ENCODE measurements at regions of chr10 and their contacts with region 1.

Region 1: GRCh38 chr10:104925232-104925851 is 284.3 kb downstream of the SORCS3 start:
- DNase-seq: peak in 2 of 5 donors; percentile 14 to 29
- ATAC-seq: no peak
- H3K4me3 ChIP-seq: no peak overlapping the region
- H3K27ac ChIP-seq: no peak overlapping the region
- H3K4me1 ChIP-seq: no peaks in the 10 kb centered on the region
- H3K27me3 ChIP-seq: peaks cover 0 to 13% (median 0%) of the 10 kb centered on the region in 9 donors
- CTCF ChIP-seq: peak; percentile 44 to 71 (median 58)
- POLR2A ChIP-seq: no peak

Region 2: GRCh38 chr10:104406715-104407650 is 518.4 kb before region 1 on chr10:
- intact Hi-C with region 1: loop called in 1 of 10 experiments (anchors 10 kb)
- DNase-seq: no peak
- ATAC-seq: peak in 1 of 4 donors; percentile 57
- H3K4me3 ChIP-seq: no peak overlapping the region
- H3K27ac ChIP-seq: no peak overlapping the region
- H3K4me1 ChIP-seq: no peaks in the 10 kb centered on the region
- H3K27me3 ChIP-seq: no peaks in the 10 kb centered on the region
- CTCF ChIP-seq: peak; percentile 17 to 52 (median 37)
- POLR2A ChIP-seq: no peak

Region 3: GRCh38 chr10:104580774-104581675 is 344.3 kb before region 1 on chr10:
- intact Hi-C with region 1: loop called in 1 of 10 experiments (anchors 10 kb)
- DNase-seq: peak; percentile 57 to 70 (median 60)
- ATAC-seq: peak; percentile 71 to 88 (median 78)
- H3K4me3 ChIP-seq: peak overlapping the region in 2 of 12 donors; percentile 1 to 9
- H3K27ac ChIP-seq: no peak overlapping the region
- H3K4me1 ChIP-seq: peaks cover 0 to 12% (median 0%) of the 10 kb centered on the region in 12 donors
- H3K27me3 ChIP-seq: peaks cover 0 to 52% (median 10%) of the 10 kb centered on the region in 9 donors
- CTCF ChIP-seq: peak; percentile 72 to 87 (median 82)
- POLR2A ChIP-seq: no peak

Region 4: GRCh38 chr10:104642658-104643302 is 282.6 kb before region 1 on chr10:
- intact Hi-C with region 1: loop called in 6 of 10 experiments (anchors 2 to 10 kb)
- DNase-seq: peak in 4 of 5 donors; percentile 15 to 51 (median 36)
- ATAC-seq: peak in 3 of 4 donors; percentile 56 to 65 (median 60)
- H3K4me3 ChIP-seq: peak overlapping the region in 7 of 12 donors; percentile 6 to 47 (median 15)
- H3K27ac ChIP-seq: no peak overlapping the region
- H3K4me1 ChIP-seq: peaks cover 0 to 39% (median 2%) of the 10 kb centered on the region in 12 donors
- H3K27me3 ChIP-seq: peaks cover 31 to 92% (median 50%) of the 10 kb centered on the region in 9 donors
- CTCF ChIP-seq: peak in 11 of 12 donors; percentile 11 to 43 (median 26)
- POLR2A ChIP-seq: no peak

Region 5: GRCh38 chr10:104650072-104650471 is 275.3 kb before region 1 on chr10:
- intact Hi-C with region 1: loop called in 8 of 10 experiments (anchors 2 to 10 kb)
- DNase-seq: no peak
- ATAC-seq: peak in 3 of 4 donors; percentile 55 to 64 (median 64)
- H3K4me3 ChIP-seq: no peak overlapping the region
- H3K27ac ChIP-seq: no peak overlapping the region
- H3K4me1 ChIP-seq: no peaks in the 10 kb centered on the region
- H3K27me3 ChIP-seq: peaks cover 0 to 28% (median 2%) of the 10 kb centered on the region in 9 donors
- CTCF ChIP-seq: peak in 11 of 12 donors; percentile 14 to 53 (median 37)
- POLR2A ChIP-seq: no peak

Region 6: GRCh38 chr10:104657457-104657856 is 267.9 kb before region 1 on chr10:
- intact Hi-C with region 1: loop called in 2 of 10 experiments (anchors 5 kb)
- DNase-seq: no peak
- ATAC-seq: no peak
- H3K4me3 ChIP-seq: no peak overlapping the region
- H3K27ac ChIP-seq: no peak overlapping the region
- H3K4me1 ChIP-seq: no peaks in the 10 kb centered on the region
- H3K27me3 ChIP-seq: peaks cover 0 to 14% (median 0%) of the 10 kb centered on the region in 9 donors
- CTCF ChIP-seq: no peak
- POLR2A ChIP-seq: no peak

Region 7: DNA sequence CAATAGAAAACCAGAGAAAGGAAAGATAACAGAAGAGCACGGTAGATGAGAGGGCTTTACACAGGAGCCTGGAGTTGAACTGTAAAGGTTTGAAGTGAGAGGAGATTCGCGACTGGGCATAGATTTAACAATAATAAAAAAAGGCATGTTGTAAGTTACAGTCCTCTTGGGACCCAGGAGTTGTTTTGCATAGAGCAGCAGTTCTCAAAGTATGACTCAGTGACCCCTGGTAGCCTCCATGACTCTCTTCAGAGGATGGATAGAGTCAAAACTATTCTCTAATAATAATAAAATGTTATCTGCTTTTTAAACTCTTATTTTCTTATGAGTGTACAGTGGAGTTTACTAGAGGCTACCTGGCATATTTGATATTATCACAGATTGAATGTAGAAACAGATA is 21.9 kb before region 1 on chr10:
- intact Hi-C with region 1: no loop called
- DNase-seq: no peak
- ATAC-seq: no peak
- H3K4me3 ChIP-seq: no peak overlapping the region
- H3K27ac ChIP-seq: no peak overlapping the region
- H3K4me1 ChIP-seq: no peaks in the 10 kb centered on the region
- H3K27me3 ChIP-seq: peaks cover 0 to 12% (median 0%) of the 10 kb centered on the region in 9 donors
- CTCF ChIP-seq: no peak
- POLR2A ChIP-seq: no peak